K562 (cell line): ENCODE measurements at regions of chr5 and their contacts with region 1.

Region 1: DNA sequence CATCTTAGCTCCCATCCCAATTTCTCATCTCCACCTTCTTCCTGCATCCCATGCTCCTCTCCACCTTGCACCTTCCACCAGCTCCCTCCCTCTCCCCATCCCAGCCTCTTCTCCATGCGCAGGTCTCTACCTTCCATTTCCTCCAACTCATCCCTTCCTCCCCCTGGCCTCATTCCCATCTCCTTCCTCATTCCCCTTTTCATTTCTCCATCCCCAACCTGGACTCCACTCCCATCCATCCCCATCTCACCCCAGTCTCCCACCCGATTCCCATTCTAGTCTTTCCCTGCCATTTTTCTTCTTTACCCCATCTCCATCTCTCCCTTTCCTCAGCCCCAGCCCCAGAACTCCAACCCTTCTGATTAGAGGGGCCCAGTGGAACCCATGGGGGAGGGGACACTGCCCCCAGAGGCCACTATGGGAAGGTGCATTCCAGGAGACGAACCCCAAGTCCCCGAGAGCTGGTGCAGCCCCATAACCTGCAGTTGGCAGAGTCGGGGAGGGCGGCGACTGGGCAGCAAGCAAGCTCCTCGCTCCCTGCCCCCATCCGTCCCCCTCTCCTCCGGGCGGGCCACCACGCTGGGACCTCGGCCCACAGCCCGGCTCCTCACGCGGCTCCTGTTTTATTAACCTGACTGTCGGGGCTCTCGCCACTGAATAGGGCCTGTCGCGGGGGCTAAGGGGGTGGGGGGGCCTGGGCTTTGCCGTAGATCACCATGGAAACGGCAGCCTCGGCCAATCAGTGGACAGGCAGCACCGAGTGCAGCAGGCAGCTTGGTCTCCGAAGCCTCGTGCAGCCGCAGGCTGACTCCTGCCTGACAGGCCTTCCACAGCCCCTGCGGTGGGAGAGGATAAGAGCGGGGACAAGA is 66.7 kb downstream of the PCDH1 start:
- DNase-seq: peak; percentile 51 to 82 (median 76)
- ATAC-seq: peak; percentile 80
- H3K4me3 ChIP-seq: no peak overlapping the region
- H3K27ac ChIP-seq: no peak overlapping the region
- H3K4me1 ChIP-seq: peaks cover under 1 to 6% of the 10 kb centered on the region in 2 experiments; a peak in 4 of 5 replicates
- H3K27me3 ChIP-seq: peaks cover 11 to 29% of the 10 kb centered on the region in 2 experiments
- CTCF ChIP-seq: peak; percentile 68 to 82 (median 73)
- EP300 ChIP-seq: no peak
- POLR2A ChIP-seq: no peak
- RAD21 ChIP-seq: peak in 1 of 2 experiments; percentile 38; a peak in 2 of 4 replicates

Region 2: DNA sequence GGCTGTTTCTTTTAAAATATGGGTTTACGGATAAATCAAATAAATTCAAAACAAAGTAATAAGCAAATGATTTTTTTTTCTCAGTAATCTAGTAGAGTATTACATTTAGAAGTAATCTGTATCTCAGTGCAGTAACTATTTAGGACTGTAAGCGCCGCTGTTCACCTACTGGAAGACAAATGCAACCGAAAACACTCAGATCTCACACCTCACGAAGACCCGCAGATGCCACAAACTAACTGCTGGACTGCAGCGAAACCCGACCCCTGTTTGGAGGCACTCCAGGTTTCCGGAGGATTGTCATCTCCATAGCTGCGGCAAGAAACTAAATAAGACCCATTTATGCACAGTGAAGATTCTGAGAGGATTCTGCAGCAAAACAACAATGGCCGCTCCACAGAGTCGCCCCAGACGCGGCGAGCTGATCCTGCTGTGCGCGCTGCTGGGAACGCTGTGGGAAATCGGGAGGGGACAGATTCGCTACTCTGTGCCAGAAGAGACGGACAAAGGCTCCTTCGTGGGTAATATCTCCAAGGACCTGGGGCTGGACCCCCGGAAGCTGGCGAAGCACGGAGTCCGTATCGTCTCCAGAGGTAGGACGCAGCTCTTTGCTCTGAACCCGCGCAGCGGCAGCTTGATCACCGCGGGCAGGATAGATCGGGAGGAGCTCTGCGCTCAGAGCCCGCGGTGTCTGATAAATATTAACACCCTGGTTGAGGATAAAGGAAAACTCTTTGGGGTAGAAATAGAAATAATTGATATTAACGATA is 418.9 kb before region 1 on chr5 and contains the start of gene PCDHGA8:
- CTCF ChIA-PET with region 1: no interaction called
- POLR2A ChIA-PET with region 1: no interaction called
- in situ Hi-C with region 1: no loop called
- intact Hi-C with region 1: no loop called
- DNase-seq: peak in 1 of 4 experiments; percentile 24
- ATAC-seq: peak; percentile 78
- H3K4me3 ChIP-seq: peak within 1 kb of the TSS; percentile 2; the same call in 1 of the 2 replicates
- H3K27ac ChIP-seq: no peak within 1 kb of the TSS
- H3K4me1 ChIP-seq: peaks cover 0 to 13% of the 10 kb centered on the region in 2 experiments; a peak in 1 of 5 replicates
- H3K27me3 ChIP-seq: peaks cover 0 to 31% of the 10 kb centered on the region in 2 experiments; a peak in 3 of 5 replicates
- CTCF ChIP-seq: peak; percentile 43 to 51 (median 50); a peak in 5 of 6 replicates
- EP300 ChIP-seq: no peak
- POLR2A ChIP-seq: no peak
- RAD21 ChIP-seq: peak; percentile 21 to 35; a peak in 3 of 4 replicates
- polyA plus RNA-seq, gene PCDHGA8: not detected

Region 3: GRCh38 chr5:141691867-141692532 is 119.5 kb before region 1 on chr5:
- CTCF ChIA-PET with region 1: interaction called, 3 read pairs
- POLR2A ChIA-PET with region 1: no interaction called
- in situ Hi-C with region 1: no loop called
- intact Hi-C with region 1: loop called (anchors 2 kb)
- DNase-seq: peak; percentile 84 to 90 (median 88)
- ATAC-seq: peak; percentile 89
- H3K4me3 ChIP-seq: peak overlapping the region; percentile 17
- H3K27ac ChIP-seq: peak overlapping the region; percentile 81
- H3K4me1 ChIP-seq: peaks cover 38 to 55% of the 10 kb centered on the region in 2 experiments
- H3K27me3 ChIP-seq: peaks cover 0 to 12% of the 10 kb centered on the region in 2 experiments; a peak in 3 of 5 replicates
- CTCF ChIP-seq: peak; percentile 97 to 99 (median 98)
- EP300 ChIP-seq: no peak
- POLR2A ChIP-seq: no peak
- RAD21 ChIP-seq: peak; percentile 94 to 95

Region 4: GRCh38 chr5:141701360-141702119 is 110.0 kb before region 1 on chr5:
- CTCF ChIA-PET with region 1: interaction called, 4 read pairs
- POLR2A ChIA-PET with region 1: no interaction called
- in situ Hi-C with region 1: loop called (anchors 10 kb)
- intact Hi-C with region 1: no loop called
- DNase-seq: no peak
- ATAC-seq: peak; percentile 16; the same call in 2 of the 3 replicates
- H3K4me3 ChIP-seq: no peak overlapping the region
- H3K27ac ChIP-seq: no peak overlapping the region
- H3K4me1 ChIP-seq: peaks cover 0 to 9% of the 10 kb centered on the region in 2 experiments; a peak in 3 of 5 replicates
- H3K27me3 ChIP-seq: peaks cover 21 to 62% of the 10 kb centered on the region in 2 experiments
- CTCF ChIP-seq: no peak
- EP300 ChIP-seq: no peak
- POLR2A ChIP-seq: no peak
- RAD21 ChIP-seq: no peak

Region 5: GRCh38 chr5:141757402-141757801 is 54.1 kb before region 1 on chr5:
- CTCF ChIA-PET with region 1: no interaction called
- POLR2A ChIA-PET with region 1: no interaction called
- in situ Hi-C with region 1: no loop called
- intact Hi-C with region 1: loop called (anchors 5 kb)
- DNase-seq: peak; percentile 31 to 55 (median 38)
- ATAC-seq: peak; percentile 85
- H3K4me3 ChIP-seq: no peak overlapping the region
- H3K27ac ChIP-seq: no peak overlapping the region
- H3K4me1 ChIP-seq: peaks cover 0 to 5% of the 10 kb centered on the region in 2 experiments; a peak in 1 of 5 replicates
- H3K27me3 ChIP-seq: peaks cover 24 to 74% of the 10 kb centered on the region in 2 experiments; a peak in 4 of 5 replicates
- CTCF ChIP-seq: peak; percentile 49 to 59 (median 52)
- EP300 ChIP-seq: no peak
- POLR2A ChIP-seq: no peak
- RAD21 ChIP-seq: peak; percentile 26 to 65; a peak in 2 of 4 replicates

Region 6: GRCh38 chr5:141968914-141969608 is 157.5 kb after region 1 on chr5 and contains the start of gene RNF14:
- CTCF ChIA-PET with region 1: no interaction called
- POLR2A ChIA-PET with region 1: no interaction called
- in situ Hi-C with region 1: no loop called
- intact Hi-C with region 1: loop called (anchors 10 kb)
- DNase-seq: peak; percentile 93 to 97 (median 94)
- ATAC-seq: peak; percentile 97
- H3K4me3 ChIP-seq: peak within 1 kb of the TSS; percentile 72
- H3K27ac ChIP-seq: peak within 1 kb of the TSS; percentile 94
- H3K4me1 ChIP-seq: peaks cover 9 to 14% of the 10 kb centered on the region in 2 experiments; a peak in 3 of 5 replicates
- H3K27me3 ChIP-seq: no peaks in the 10 kb centered on the region
- CTCF ChIP-seq: peak; percentile 85 to 97 (median 86)
- EP300 ChIP-seq: no peak
- POLR2A ChIP-seq: peak; percentile 98
- RAD21 ChIP-seq: peak in 1 of 2 experiments; percentile 25; a peak in 1 of 4 replicates
- polyA plus RNA-seq, gene RNF14: 100 to 140 TPM